A673 (cell line): ENCODE measurements at regions of chr1 and their contacts with region 1.

Region 1: DNA sequence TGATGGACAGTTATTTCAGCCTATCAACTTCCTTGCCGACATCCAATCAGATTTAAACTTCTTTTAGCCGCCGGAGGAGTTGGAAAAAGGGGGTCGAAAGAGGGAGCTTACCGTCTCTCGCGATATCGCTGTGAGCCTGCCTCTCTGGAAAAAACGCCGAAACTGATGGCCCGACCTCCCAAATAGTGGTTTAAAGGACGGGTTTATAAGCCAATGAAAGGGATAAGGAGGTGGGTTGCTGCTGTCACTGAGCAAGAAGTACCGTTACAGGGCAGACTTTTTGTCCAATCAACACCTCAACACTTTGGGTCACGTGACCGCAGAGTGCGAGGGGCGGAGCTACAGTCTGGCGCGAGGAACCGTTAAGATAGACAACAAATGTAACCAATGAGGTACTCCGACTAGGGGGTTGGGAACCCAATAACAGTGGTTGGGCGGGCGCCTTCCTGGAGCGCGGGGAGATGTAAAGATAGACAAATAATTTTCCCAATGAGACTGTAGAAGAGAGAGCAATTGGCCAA is at the start of gene RBM15:
- DNase-seq: peak; percentile 100
- H3K4me3 ChIP-seq: peak within 1 kb of the TSS; percentile 75
- H3K27ac ChIP-seq: peak within 1 kb of the TSS; percentile 98
- H3K4me1 ChIP-seq: peaks cover 35% of the 10 kb centered on the region
- H3K27me3 ChIP-seq: no peaks in the 10 kb centered on the region
- CTCF ChIP-seq: no peak
- total RNA-seq, gene RBM15: 59.9 and 60.3 TPM in 2 replicates

Region 2: DNA sequence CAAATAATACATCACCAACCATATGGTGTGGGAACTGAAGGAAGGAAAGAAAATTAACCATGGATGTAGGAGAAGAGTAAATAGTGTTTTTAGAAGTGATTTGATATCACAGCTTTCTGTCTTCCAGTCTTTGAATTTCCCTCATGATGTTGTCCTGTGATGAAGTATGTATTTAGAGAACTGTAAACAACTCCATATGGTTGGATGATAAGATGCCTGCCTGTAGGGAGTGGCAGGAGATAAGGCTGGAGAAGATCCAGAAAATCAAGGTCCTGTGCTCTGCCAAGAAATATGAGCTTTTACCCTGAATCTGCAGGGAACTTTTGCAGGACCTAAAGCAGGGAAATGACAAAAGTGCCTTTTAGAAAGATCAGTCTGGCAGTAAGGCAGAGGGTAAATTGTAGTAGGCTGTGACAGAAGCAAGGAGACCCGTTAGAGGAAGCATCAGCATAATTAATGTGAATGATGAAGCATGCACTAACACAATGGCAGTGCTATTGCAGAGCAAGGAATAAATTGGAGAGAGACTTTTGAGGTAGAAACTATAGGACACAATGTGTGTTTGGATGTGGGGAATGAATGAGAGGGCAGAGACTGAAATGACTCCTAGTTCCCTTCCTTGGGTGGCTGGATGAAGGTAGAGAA is 823.0 kb after region 1 on chr1:
- CTCF ChIA-PET with region 1: interaction called, 12 read pairs
- POLR2A ChIA-PET with region 1: no interaction called
- intact Hi-C with region 1: no loop called
- DNase-seq: no peak
- H3K4me3 ChIP-seq: no peak overlapping the region
- H3K27ac ChIP-seq: no peak overlapping the region
- H3K4me1 ChIP-seq: peaks cover 6% of the 10 kb centered on the region
- H3K27me3 ChIP-seq: no peaks in the 10 kb centered on the region
- CTCF ChIP-seq: no peak